Heart right ventricle (tissue), 16 donors: ENCODE measurements at regions of chr9 and their contacts with region 1.

Region 1: DNA sequence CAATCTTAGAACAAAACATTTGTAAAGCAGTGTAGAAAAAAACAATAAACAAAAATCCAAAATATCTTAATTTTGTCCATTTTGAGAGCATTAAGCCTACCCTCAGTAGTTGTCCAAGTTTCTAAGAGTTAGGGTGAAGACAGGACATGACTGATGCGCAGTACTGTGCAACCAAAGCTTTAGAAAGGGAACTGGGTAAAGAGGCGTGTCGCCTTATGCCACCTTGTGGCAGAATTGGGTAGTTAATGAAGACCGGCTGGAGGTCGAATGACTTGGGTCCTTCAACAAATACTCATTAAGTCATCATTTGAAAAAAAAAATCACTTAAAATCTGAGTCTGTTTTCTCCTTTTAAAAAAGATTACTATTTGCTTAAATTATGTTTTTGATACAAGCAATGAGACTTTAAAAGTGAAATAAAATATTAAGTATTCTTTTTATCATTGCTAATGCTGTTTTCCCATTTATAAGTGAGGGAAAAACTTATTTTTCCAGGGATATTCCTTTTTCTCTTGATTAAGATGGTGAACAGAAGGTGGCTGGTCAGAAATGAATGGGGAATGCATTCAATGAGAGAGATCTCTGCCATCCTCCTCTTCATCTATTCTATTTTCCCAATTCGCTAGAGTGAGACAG is 3.5 kb upstream of the RNF20 start:
- DNase-seq: peak in 1 of 2 donors; percentile 71
- ATAC-seq: peak in 7 of 8 donors; percentile 26 to 51 (median 40)
- H3K4me3 ChIP-seq: no peak overlapping the region
- H3K27ac ChIP-seq: no peak overlapping the region
- H3K4me1 ChIP-seq: peaks cover 0 to 27% (median 16%) of the 10 kb centered on the region in 9 donors
- H3K27me3 ChIP-seq: no peaks in the 10 kb centered on the region
- CTCF ChIP-seq: peak; percentile 74 to 92 (median 85)

Region 2: GRCh38 chr9:101458955-101459631 is 71.1 kb before region 1 on chr9:
- intact Hi-C with region 1: loop called in 8 of 10 experiments (anchors 1 to 2 kb)
- DNase-seq: peak in 1 of 2 donors; percentile 23
- ATAC-seq: peak; percentile 63 to 89 (median 79)
- H3K4me3 ChIP-seq: no peak overlapping the region
- H3K27ac ChIP-seq: no peak overlapping the region
- H3K4me1 ChIP-seq: no peaks in the 10 kb centered on the region
- H3K27me3 ChIP-seq: peaks cover 0 to 6% (median 0%) of the 10 kb centered on the region in 7 donors
- CTCF ChIP-seq: peak; percentile 47 to 86 (median 72)

Region 3: GRCh38 chr9:101465392-101465791 is 64.8 kb before region 1 on chr9:
- intact Hi-C with region 1: loop called in 4 of 10 experiments (anchors 2 to 5 kb)
- DNase-seq: peak in 1 of 2 donors; percentile 33
- ATAC-seq: peak; percentile 29 to 89 (median 74)
- H3K4me3 ChIP-seq: no peak overlapping the region
- H3K27ac ChIP-seq: no peak overlapping the region
- H3K4me1 ChIP-seq: peaks cover 0 to 7% (median 0%) of the 10 kb centered on the region in 9 donors
- H3K27me3 ChIP-seq: peaks cover 0 to 6% (median 0%) of the 10 kb centered on the region in 7 donors
- CTCF ChIP-seq: peak in 8 of 9 donors; percentile 25 to 62 (median 48)

Region 4: GRCh38 chr9:101485924-101486692 is 44.1 kb before region 1 on chr9:
- intact Hi-C with region 1: no loop called
- DNase-seq: peak; percentile 26 to 42
- ATAC-seq: peak; percentile 55 to 84 (median 79)
- H3K4me3 ChIP-seq: peak overlapping the region; percentile 57 to 84 (median 74)
- H3K27ac ChIP-seq: peak overlapping the region; percentile 87 to 96 (median 94)
- H3K4me1 ChIP-seq: peaks cover 0 to 56% (median 15%) of the 10 kb centered on the region in 9 donors
- H3K27me3 ChIP-seq: peaks cover 0 to 46% (median 0%) of the 10 kb centered on the region in 7 donors
- CTCF ChIP-seq: no peak

Region 5: GRCh38 chr9:101977614-101978210 is 447.5 kb after region 1 on chr9:
- intact Hi-C with region 1: no loop called
- DNase-seq: no peak
- ATAC-seq: peak in 1 of 8 donors; percentile 28
- H3K4me3 ChIP-seq: no peak overlapping the region
- H3K27ac ChIP-seq: no peak overlapping the region
- H3K4me1 ChIP-seq: no peaks in the 10 kb centered on the region
- H3K27me3 ChIP-seq: no peaks in the 10 kb centered on the region
- CTCF ChIP-seq: peak; percentile 33 to 68 (median 61)